Motor neuron (in vitro differentiated cells): ENCODE measurements at regions of chr12 and their contacts with region 1.

Region 1: GRCh38 chr12:121443193-121443870 is 43.4 kb downstream of the RNF34 start:
- ATAC-seq: peak; percentile 91 to 98 (median 96)
- H3K4me3 ChIP-seq: no peak overlapping the region
- H3K27ac ChIP-seq: no peak overlapping the region
- H3K4me1 ChIP-seq: no peaks in the 10 kb centered on the region

Region 2: GRCh38 chr12:121334513-121335343 is 108.6 kb before region 1 on chr12:
- in situ Hi-C with region 1: loop called in 1 of 9 experiments (anchors 25 kb)
- ATAC-seq: peak in 6 of 8 experiments; percentile 55 to 90 (median 76)
- H3K4me3 ChIP-seq: no peak overlapping the region
- H3K27ac ChIP-seq: no peak overlapping the region
- H3K4me1 ChIP-seq: no peaks in the 10 kb centered on the region

Region 3: GRCh38 chr12:122238861-122239260 is 795.5 kb after region 1 on chr12:
- in situ Hi-C with region 1: no loop called
- ATAC-seq: no peak
- H3K4me3 ChIP-seq: no peak overlapping the region
- H3K27ac ChIP-seq: no peak overlapping the region
- H3K4me1 ChIP-seq: no peaks in the 10 kb centered on the region